ENCODE measurements at regions of chr14 and their contacts with region 1.

Region 1: GRCh38 chr14:89425931-89426330 is 8.9 kb upstream of the FOXN3 start:
- DNase-seq: no peak
- ATAC-seq: peak in 1 of 8 donors; percentile 22
- H3K4me3 ChIP-seq: no peak overlapping the region
- H3K27ac ChIP-seq: peak overlapping the region in 1 of 10 donors; percentile 13
- H3K4me1 ChIP-seq: peaks cover 8 to 65% (median 49%) of the 10 kb centered on the region in 9 donors
- H3K27me3 ChIP-seq: no peaks in the 10 kb centered on the region
- CTCF ChIP-seq: no peak

Region 2: DNA sequence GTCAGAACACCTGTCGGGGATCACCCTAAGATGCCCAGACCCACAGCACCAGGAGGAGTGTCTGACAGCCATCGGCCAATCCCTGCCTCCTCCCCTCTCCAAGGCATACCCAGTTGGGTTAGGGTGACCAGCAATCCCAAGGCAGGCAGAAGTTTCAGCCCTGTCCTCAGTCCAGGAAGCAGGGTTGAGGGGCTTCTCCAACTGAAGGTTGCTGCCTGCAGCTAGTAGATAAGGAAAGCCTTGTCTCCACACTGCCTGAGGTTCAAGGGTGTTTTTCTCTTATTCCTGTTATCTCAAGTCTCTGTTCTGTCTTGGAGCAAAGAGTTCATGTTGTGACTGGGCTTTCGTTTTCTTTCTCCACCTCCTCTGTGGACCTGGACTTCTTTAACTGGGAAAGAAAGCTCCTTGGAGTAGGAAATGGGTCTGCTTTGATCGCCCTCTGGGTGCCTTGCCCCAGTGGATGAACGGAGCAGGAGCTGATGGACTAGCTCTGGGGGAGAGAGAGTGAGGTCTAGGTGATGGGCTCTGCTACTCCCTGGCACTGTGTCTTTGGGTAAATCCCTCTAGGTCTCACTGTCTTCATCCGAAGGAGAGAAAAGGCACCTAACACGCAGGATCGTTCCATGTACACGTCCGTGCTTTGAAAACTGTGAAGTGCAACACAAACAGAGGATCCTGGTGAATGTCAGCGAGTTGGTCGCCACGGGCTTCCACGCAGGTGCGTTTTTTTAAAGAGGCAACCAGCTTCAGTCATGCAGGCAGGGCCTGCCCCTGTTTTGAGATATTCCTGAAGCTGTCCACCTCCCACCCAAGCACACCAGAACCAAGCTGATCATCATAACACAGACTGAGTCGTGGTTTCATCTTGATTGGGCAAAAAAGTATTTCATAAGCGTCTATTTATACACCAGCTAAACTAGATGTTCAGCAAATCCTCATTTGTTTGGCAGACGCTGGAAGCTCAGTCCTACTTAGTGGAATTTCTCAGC is 43.6 kb after region 1 on chr14:
- intact Hi-C with region 1: loop called in 1 of 10 experiments (anchors 5 kb)
- DNase-seq: no peak
- ATAC-seq: peak in 5 of 8 donors; percentile 12 to 54 (median 27)
- H3K4me3 ChIP-seq: no peak overlapping the region
- H3K27ac ChIP-seq: no peak overlapping the region
- H3K4me1 ChIP-seq: peaks cover 0 to 45% (median 10%) of the 10 kb centered on the region in 9 donors
- H3K27me3 ChIP-seq: no peaks in the 10 kb centered on the region
- CTCF ChIP-seq: no peak

Region 3: DNA sequence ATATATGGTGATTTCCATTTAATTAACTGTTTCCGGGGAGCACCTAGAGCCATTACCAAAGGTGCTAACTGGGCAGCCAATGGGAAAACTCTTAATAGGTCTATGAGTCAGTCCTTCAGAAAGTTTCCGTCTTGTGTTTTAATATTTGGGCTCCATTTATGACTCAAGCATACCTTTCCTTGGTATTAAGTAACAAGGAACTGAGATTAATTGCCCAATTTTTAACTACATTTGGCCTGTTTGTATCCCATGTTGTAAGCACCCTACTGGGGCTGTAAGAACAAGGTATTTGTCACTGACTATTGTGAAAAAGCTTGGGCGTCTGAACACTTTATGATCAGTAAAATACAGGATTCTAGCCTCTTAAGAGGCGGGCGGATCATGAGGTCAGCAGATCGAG is 53.9 kb after region 1 on chr14:
- intact Hi-C with region 1: loop called in 1 of 10 experiments (anchors 5 kb)
- DNase-seq: no peak
- ATAC-seq: no peak
- H3K4me3 ChIP-seq: no peak overlapping the region
- H3K27ac ChIP-seq: peak overlapping the region in 1 of 10 donors; percentile 20
- H3K4me1 ChIP-seq: peaks cover 0 to 25% (median 6%) of the 10 kb centered on the region in 9 donors
- H3K27me3 ChIP-seq: no peaks in the 10 kb centered on the region
- CTCF ChIP-seq: no peak

Region 4: DNA sequence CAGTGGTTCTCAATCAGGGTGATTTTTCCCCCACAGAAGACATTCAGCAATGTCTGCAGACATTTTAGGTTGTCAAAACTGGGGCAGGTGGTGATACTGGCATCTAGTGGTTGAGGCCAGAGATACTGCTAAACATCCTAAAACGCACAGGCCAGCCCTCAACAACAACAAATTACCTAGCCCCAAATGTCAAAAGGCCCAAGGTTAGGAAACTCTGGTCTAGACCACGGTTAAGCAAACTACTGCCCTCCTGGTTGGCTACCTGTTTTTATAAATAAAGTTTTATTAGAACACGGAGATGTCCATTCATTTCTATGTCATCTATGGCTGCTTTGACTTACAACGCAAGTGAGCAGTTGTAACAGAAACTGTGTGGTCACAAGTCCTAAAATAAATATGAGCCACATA is 341.9 kb after region 1 on chr14:
- intact Hi-C with region 1: loop called in 2 of 10 experiments (anchors 10 kb)
- DNase-seq: peak in 1 of 2 donors; percentile 49
- ATAC-seq: peak in 6 of 8 donors; percentile 58 to 74 (median 66)
- H3K4me3 ChIP-seq: no peak overlapping the region
- H3K27ac ChIP-seq: no peak overlapping the region
- H3K4me1 ChIP-seq: peaks cover 0 to 25% (median 0%) of the 10 kb centered on the region in 9 donors
- H3K27me3 ChIP-seq: no peaks in the 10 kb centered on the region
- CTCF ChIP-seq: peak; percentile 43 to 75 (median 60)

Measured in heart right ventricle (tissue), 16 donors.